ENCODE measurements at regions of chr17 and their contacts with region 1.

Region 1: GRCh38 chr17:15462976-15463772 is 4.2 kb downstream of the CDRT4 start:
- DNase-seq: peak in 1 of 2 donors; percentile 34
- ATAC-seq: peak; percentile 72 to 84 (median 80)
- H3K4me3 ChIP-seq: no peak overlapping the region
- H3K27ac ChIP-seq: peak overlapping the region; percentile 32
- H3K4me1 ChIP-seq: peaks cover 25% of the 10 kb centered on the region
- H3K27me3 ChIP-seq: no peaks in the 10 kb centered on the region
- CTCF ChIP-seq: no peak

Region 2: GRCh38 chr17:15392326-15392741 is 70.8 kb before region 1 on chr17:
- intact Hi-C with region 1: no loop called
- DNase-seq: no peak
- ATAC-seq: peak in 3 of 4 donors; percentile 36 to 47 (median 44)
- H3K4me3 ChIP-seq: no peak overlapping the region
- H3K27ac ChIP-seq: no peak overlapping the region
- H3K4me1 ChIP-seq: no peaks in the 10 kb centered on the region
- H3K27me3 ChIP-seq: no peaks in the 10 kb centered on the region
- CTCF ChIP-seq: no peak

Region 3: GRCh38 chr17:15502369-15503112 is 39.4 kb after region 1 on chr17:
- intact Hi-C with region 1: loop called in 1 of 2 experiments (anchors 5 kb)
- DNase-seq: peak; percentile 92 to 96
- ATAC-seq: peak; percentile 92 to 95 (median 94)
- H3K4me3 ChIP-seq: peak overlapping the region; percentile 42
- H3K27ac ChIP-seq: peak overlapping the region; percentile 54
- H3K4me1 ChIP-seq: peaks cover 11% of the 10 kb centered on the region
- H3K27me3 ChIP-seq: no peaks in the 10 kb centered on the region
- CTCF ChIP-seq: peak; percentile 84